Caco-2 (cell line): ENCODE measurements at regions of chr6 and their contacts with region 1.

Region 1: GRCh38 chr6:83514866-83515466 is 2.6 kb downstream of the PRSS35 start:
- DNase-seq: peak; percentile 46 to 67
- H3K4me3 ChIP-seq: no peak overlapping the region
- H3K4me3 Mint-ChIP-seq: peak overlapping the region; percentile 84
- H3K27ac Mint-ChIP-seq: no peak overlapping the region
- H3K4me1 ChIP-seq: peaks cover 19% of the 10 kb centered on the region
- H3K4me1 Mint-ChIP-seq: peaks cover 25% of the 10 kb centered on the region
- H3K27me3 ChIP-seq: no peaks in the 10 kb centered on the region
- H3K27me3 Mint-ChIP-seq: no peaks in the 10 kb centered on the region
- CTCF ChIP-seq: peak; percentile 76 to 86

Region 2: GRCh38 chr6:82166493-82166892 is 1348.5 kb before region 1 on chr6:
- CTCF ChIA-PET with region 1: no interaction called
- POLR2A ChIA-PET with region 1: no interaction called
- intact Hi-C with region 1: no loop called
- DNase-seq: no peak
- H3K4me3 ChIP-seq: no peak overlapping the region
- H3K4me3 Mint-ChIP-seq: no peak overlapping the region
- H3K27ac Mint-ChIP-seq: no peak overlapping the region
- H3K4me1 ChIP-seq: no peaks in the 10 kb centered on the region
- H3K4me1 Mint-ChIP-seq: no peaks in the 10 kb centered on the region
- H3K27me3 ChIP-seq: no peaks in the 10 kb centered on the region
- H3K27me3 Mint-ChIP-seq: no peaks in the 10 kb centered on the region
- CTCF ChIP-seq: no peak

Region 3: GRCh38 chr6:83192871-83193746 is 321.9 kb before region 1 on chr6 and contains the starts of genes PGM3 and RWDD2A:
- CTCF ChIA-PET with region 1: no interaction called
- POLR2A ChIA-PET with region 1: no interaction called
- intact Hi-C with region 1: loop called (anchors 10 kb)
- DNase-seq: peak; percentile 89 to 94
- H3K4me3 ChIP-seq: peak within 1 kb of the TSS; percentile 97
- H3K4me3 Mint-ChIP-seq: peak within 1 kb of the TSS; percentile 90
- H3K27ac Mint-ChIP-seq: peak within 1 kb of the TSS; percentile 92
- H3K4me1 ChIP-seq: peaks cover 24% of the 10 kb centered on the region
- H3K4me1 Mint-ChIP-seq: peaks cover 16% of the 10 kb centered on the region
- H3K27me3 ChIP-seq: no peaks in the 10 kb centered on the region
- H3K27me3 Mint-ChIP-seq: no peaks in the 10 kb centered on the region
- CTCF ChIP-seq: no peak
- total RNA-seq, gene PGM3: 96.4 and 97.0 TPM in 2 replicates
- total RNA-seq, gene RWDD2A: 3.5 and 3.6 TPM in 2 replicates

Region 4: GRCh38 chr6:83285917-83286316 is 229.0 kb before region 1 on chr6:
- CTCF ChIA-PET with region 1: no interaction called
- POLR2A ChIA-PET with region 1: no interaction called
- intact Hi-C with region 1: loop called (anchors 10 kb)
- DNase-seq: no peak
- H3K4me3 ChIP-seq: no peak overlapping the region
- H3K4me3 Mint-ChIP-seq: no peak overlapping the region
- H3K27ac Mint-ChIP-seq: no peak overlapping the region
- H3K4me1 ChIP-seq: no peaks in the 10 kb centered on the region
- H3K4me1 Mint-ChIP-seq: no peaks in the 10 kb centered on the region
- H3K27me3 ChIP-seq: no peaks in the 10 kb centered on the region
- H3K27me3 Mint-ChIP-seq: no peaks in the 10 kb centered on the region
- CTCF ChIP-seq: no peak

Region 5: GRCh38 chr6:83417880-83418663 is 96.9 kb before region 1 on chr6:
- CTCF ChIA-PET with region 1: interaction called, 61 read pairs
- POLR2A ChIA-PET with region 1: interaction called, 7 read pairs
- intact Hi-C with region 1: loop called (anchors 1 kb)
- DNase-seq: peak in 1 of 2 experiments; percentile 63
- H3K4me3 ChIP-seq: no peak overlapping the region
- H3K4me3 Mint-ChIP-seq: no peak overlapping the region
- H3K27ac Mint-ChIP-seq: peak overlapping the region; percentile 5
- H3K4me1 ChIP-seq: peaks cover 33% of the 10 kb centered on the region
- H3K4me1 Mint-ChIP-seq: peaks cover 35% of the 10 kb centered on the region
- H3K27me3 ChIP-seq: no peaks in the 10 kb centered on the region
- H3K27me3 Mint-ChIP-seq: no peaks in the 10 kb centered on the region
- CTCF ChIP-seq: peak; percentile 63 to 75

Region 6: DNA sequence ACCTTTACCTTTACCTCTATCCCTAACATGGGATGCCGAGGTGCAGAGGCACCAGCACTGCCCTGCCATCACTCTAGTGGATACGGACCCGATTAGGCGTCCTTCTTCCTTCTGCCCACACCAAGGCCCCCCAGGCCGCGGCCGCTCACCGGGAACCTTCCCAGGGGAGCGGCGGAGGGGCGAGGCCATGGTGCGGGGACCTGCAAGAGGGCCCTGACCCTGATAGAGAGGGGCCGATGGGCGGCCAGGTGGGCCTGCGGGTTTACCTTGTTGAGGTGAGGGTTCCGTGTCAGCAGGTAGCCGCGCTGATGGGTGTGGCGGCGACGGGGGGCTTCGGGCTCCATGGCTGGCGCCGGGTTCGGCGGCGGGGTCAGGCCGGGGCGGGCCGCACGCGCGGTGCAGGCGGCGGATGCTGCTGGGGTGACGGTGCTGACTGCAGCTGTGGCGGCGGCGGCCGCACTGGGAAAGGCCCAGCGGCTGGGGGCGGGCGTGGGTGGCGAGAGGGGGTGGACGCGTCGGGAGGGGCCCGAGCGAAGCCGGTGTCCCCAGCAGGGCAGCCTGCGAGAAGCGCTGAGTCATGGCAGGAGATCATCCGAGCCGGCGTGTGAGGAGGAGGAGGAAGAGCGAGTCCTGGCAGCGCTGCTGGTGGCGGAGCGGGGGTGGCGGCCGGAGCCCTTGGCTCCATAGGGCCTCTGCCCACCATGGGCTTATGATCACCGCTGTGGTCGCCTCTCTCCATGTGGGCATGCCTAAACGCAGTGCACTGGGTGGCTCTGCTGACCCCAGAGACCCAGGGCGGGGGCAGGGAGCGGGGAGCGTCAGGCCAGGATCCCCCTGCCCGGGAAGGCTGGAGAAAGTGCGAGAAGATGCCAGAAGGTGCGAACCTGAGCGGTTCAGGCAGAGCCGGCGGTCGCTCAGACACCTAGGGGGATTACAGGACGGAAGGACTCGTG is 84.1 kb before region 1 on chr6 and contains the start of gene ME1:
- CTCF ChIA-PET with region 1: interaction called, 5 read pairs
- POLR2A ChIA-PET with region 1: interaction called, 7 read pairs
- intact Hi-C with region 1: loop called (anchors 1 kb)
- DNase-seq: peak; percentile 91 to 94
- H3K4me3 ChIP-seq: peak within 1 kb of the TSS; percentile 79
- H3K4me3 Mint-ChIP-seq: peak within 1 kb of the TSS; percentile 100
- H3K27ac Mint-ChIP-seq: peak within 1 kb of the TSS; percentile 99
- H3K4me1 ChIP-seq: peaks cover 41% of the 10 kb centered on the region
- H3K4me1 Mint-ChIP-seq: peaks cover 25% of the 10 kb centered on the region
- H3K27me3 ChIP-seq: no peaks in the 10 kb centered on the region
- H3K27me3 Mint-ChIP-seq: no peaks in the 10 kb centered on the region
- CTCF ChIP-seq: no peak
- total RNA-seq, gene ME1: 121 and 131 TPM in 2 replicates